Naive thymus-derived CD8-positive, alpha-beta T cell (primary cell): ENCODE measurements at regions of chr6 and their contacts with region 1.

Region 1: DNA sequence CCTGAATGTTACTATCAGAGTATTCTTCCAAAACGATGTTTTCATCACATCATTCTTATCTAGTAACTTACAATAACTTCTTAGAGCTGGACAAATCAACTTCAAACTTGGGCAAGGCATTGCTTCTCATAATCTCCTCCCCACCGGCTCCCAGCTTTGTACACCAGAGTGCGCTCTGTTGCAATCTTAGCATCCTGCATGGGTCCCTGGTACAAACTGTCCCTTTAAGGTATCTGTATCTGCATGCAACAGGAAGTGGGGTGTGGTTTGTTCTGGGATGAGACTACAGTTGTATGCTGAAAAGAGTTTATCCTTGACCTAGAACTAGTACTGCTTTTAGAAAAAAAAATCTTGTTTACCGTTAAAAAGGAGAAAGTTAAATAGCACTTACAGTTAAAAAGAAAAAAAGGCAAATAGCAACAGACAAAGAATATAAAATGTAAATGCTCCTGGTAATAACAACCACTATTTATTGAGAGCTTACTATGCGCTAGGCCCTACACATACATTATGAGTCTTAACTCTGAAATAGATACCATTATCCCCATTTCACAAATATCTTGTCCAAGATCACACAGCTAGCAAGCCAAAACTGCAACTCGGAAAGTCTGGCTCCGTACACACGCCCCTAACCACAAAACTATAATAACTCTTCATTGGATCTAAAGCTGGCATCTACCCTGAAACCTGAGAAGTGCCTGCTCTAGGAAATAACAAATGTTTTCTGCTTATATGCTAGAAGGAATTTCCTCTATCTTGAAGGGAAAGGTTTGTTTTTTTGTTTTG is 9.8 kb upstream of the HECA start:
- DNase-seq: peak; percentile 37 to 92 (median 80)
- ATAC-seq: peak; percentile 91 to 100
- H3K4me3 Mint-ChIP-seq: peak overlapping the region; percentile 24 to 78 (median 70)
- H3K27ac Mint-ChIP-seq: peak overlapping the region; percentile 35 to 97 (median 94)
- H3K4me1 Mint-ChIP-seq: peaks cover 30 to 66% (median 52%) of the 10 kb centered on the region in 4 donors
- H3K27me3 Mint-ChIP-seq: no peaks in the 10 kb centered on the region

Region 2: DNA sequence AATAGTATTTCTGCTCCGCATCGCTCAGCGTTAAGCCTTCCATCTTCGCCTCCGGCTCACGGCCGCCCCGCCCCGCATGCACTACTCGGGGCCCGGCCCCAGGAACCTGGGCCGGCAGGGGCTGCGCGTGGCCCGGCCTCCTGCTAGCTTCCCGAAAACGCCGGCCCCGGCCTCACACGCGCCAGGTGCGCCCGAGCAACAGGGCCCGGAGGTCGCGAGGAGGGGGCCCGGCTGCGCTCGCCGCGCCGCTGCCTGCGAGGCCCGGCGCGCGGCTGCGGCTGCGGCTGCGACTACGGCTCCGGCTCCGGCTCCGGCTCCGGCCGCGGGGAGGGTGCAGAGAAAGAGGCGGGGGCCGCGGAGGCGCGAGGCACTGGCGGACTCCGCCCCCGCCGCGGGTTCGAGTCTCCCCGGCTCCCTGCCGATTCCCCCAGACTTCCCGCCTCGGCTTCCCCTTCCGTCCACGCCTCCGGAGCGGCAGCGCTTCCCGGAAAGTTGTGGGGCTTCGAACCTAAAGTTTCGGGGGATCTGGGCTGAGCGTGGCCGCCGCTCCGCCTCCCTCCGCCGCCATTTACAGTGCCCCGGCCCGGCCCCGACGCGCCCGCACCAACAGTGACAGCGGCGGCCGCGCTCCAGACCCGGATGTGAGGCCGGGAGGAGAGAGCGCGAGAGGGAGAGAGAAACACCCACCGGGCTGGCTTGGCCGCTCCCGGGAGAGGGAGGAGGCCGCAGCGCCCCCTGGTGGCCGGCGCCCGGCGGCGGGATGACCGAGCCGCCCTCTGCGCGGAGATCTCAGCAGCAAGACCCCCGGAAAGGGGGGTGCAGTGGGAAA is 137.2 kb before region 1 on chr6 and contains the start of gene REPS1:
- POLR2A ChIA-PET with region 1: interaction called, 15 read pairs
- DNase-seq: peak; percentile 85 to 96 (median 92)
- ATAC-seq: peak; percentile 84 to 87
- H3K4me3 Mint-ChIP-seq: peak within 1 kb of the TSS in 9 of 10 donors; percentile 87 to 96 (median 91)
- H3K27ac Mint-ChIP-seq: peak within 1 kb of the TSS in 9 of 10 donors; percentile 61 to 96 (median 93)
- H3K4me1 Mint-ChIP-seq: peaks cover 8 to 23% (median 15%) of the 10 kb centered on the region in 4 donors
- H3K27me3 Mint-ChIP-seq: no peaks in the 10 kb centered on the region
- polyA plus RNA-seq, gene REPS1: 19.4 to 45.3 (median 28.4) TPM

Region 3: DNA sequence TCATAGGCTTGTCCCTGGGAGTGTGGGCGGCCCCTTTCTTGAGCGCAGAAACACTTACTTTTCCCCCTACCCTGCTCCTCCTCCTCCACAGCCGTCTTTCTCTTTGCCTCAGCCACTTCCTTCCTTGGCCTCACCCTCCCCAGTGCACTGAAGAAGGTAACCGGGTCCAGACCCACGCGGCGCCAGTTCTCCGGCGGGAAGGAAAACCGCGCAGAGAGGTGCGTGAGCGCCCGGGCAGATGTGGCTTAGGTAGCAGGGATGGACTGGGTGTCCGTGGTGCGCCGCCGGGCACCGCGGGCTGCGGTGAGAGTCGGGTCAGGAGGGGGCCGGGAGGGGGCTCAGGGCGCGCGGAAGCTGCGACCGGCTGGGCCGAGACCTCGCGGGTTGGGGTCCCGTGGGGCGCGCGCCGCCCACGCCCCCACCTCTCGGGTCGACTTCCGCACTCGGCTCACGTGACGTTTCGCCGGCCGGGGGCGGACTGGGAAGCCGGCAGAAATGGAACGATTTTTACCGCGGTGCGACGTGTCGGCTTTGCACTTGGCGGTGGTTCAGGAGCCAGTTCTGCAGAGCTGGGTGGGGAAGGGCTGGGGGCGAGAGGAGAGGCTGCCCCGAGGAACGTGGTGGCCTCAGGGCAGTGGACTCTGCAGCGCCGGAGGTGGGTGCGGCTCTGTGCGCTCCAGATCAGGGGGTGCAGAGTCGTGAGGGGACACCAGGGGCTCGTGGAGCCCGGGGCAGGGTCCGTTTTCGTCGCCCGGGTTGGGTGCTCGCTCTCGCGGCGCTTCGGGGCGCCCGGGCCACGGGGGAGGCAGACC is 96.2 kb before region 1 on chr6 and contains the start of gene ABRACL:
- POLR2A ChIA-PET with region 1: interaction called, 14 read pairs
- DNase-seq: peak; percentile 54 to 88 (median 74)
- ATAC-seq: peak; percentile 83 to 89
- H3K4me3 Mint-ChIP-seq: peak within 1 kb of the TSS in 7 of 10 donors; percentile 87 to 97 (median 93)
- H3K27ac Mint-ChIP-seq: peak within 1 kb of the TSS; percentile 88 to 97 (median 96)
- H3K4me1 Mint-ChIP-seq: peaks cover 16 to 33% (median 20%) of the 10 kb centered on the region in 4 donors
- H3K27me3 Mint-ChIP-seq: no peaks in the 10 kb centered on the region
- polyA plus RNA-seq, gene ABRACL: 210 to 228 (median 217) TPM

Region 4: DNA sequence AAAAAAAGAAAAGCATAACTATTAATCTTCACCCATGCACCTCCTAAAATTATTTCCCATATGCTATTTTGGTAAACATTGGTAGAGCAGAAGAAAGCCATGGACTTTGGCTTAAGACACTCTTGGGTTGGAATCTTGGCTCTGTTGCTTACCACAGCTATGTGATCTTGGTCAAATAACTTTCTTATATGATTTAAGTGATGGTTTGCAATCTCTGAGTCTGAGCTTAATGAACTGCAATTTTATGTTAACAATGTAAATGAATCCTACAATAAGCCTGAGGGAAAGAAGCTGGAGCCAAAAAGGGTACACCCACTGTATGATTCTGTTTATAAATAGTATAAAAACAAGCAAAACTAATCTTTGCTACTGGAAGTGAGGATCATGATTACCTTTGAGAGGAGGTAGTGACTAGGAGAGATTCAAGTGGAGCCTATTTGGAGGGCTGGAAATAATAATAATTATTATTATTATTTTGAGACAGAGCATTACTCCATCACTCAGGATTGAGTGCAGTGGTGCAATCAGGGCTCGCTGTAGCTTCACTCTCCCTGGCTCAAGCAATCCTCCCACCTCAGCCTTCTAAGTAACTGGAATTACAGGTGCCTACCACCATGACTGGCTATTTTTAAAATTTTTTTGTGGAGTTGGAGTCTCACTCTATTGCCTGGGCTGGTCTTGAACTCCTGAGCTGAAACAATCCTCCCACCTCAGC is 62.0 kb before region 1 on chr6:
- POLR2A ChIA-PET with region 1: no interaction called
- DNase-seq: no peak
- ATAC-seq: no peak
- H3K4me3 Mint-ChIP-seq: no peak overlapping the region
- H3K27ac Mint-ChIP-seq: no peak overlapping the region
- H3K4me1 Mint-ChIP-seq: peaks cover 0 to 6% (median 3%) of the 10 kb centered on the region in 4 donors
- H3K27me3 Mint-ChIP-seq: peaks cover 0 to 3% (median 0%) of the 10 kb centered on the region in 5 donors

Region 5: GRCh38 chr6:139080255-139080920 is 44.7 kb before region 1 on chr6:
- POLR2A ChIA-PET with region 1: no interaction called
- DNase-seq: no peak
- ATAC-seq: no peak
- H3K4me3 Mint-ChIP-seq: no peak overlapping the region
- H3K27ac Mint-ChIP-seq: no peak overlapping the region
- H3K4me1 Mint-ChIP-seq: peaks cover 0 to 11% (median 6%) of the 10 kb centered on the region in 4 donors
- H3K27me3 Mint-ChIP-seq: no peaks in the 10 kb centered on the region

Region 6: GRCh38 chr6:139109558-139109957 is 15.5 kb before region 1 on chr6:
- POLR2A ChIA-PET with region 1: interaction called, 38 read pairs
- DNase-seq: peak in 4 of 10 donors; percentile 19 to 38 (median 34)
- ATAC-seq: no peak
- H3K4me3 Mint-ChIP-seq: peak overlapping the region in 2 of 10 donors; percentile 22 to 30
- H3K27ac Mint-ChIP-seq: peak overlapping the region in 8 of 10 donors; percentile 60 to 96 (median 81)
- H3K4me1 Mint-ChIP-seq: peaks cover 21 to 71% (median 55%) of the 10 kb centered on the region in 4 donors
- H3K27me3 Mint-ChIP-seq: no peaks in the 10 kb centered on the region

Region 7: DNA sequence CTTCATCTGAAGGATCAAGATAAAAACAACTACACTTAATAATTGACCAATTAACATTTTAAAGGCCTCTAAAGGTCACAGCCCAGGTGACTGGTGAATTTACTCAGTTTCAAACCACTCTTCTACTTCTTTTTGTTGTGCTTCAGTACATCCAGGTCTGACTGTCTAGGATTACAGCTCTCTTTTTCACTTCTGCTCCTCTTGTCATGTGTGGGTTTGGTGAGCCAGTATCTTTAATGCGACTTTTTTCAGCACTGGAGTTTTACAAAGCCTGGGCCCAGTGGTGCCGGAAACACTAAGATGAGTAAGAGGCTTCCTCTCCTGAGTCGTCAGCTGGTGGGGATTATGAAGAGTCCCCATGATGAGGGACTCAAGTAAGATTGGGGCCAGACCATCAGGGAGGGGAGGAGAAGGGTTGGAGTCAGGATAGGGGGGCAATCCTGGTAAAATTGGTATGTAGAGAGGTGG is 36.8 kb after region 1 on chr6:
- POLR2A ChIA-PET with region 1: interaction called, 18 read pairs
- DNase-seq: peak; percentile 25 to 76 (median 60)
- ATAC-seq: peak; percentile 53 to 65
- H3K4me3 Mint-ChIP-seq: peak overlapping the region; percentile 70 to 95 (median 83)
- H3K27ac Mint-ChIP-seq: peak overlapping the region; percentile 85 to 97 (median 94)
- H3K4me1 Mint-ChIP-seq: peaks cover 51 to 95% (median 91%) of the 10 kb centered on the region in 4 donors
- H3K27me3 Mint-ChIP-seq: no peaks in the 10 kb centered on the region

Region 8: GRCh38 chr6:139173172-139173571 is 48.1 kb after region 1 on chr6:
- POLR2A ChIA-PET with region 1: interaction called, 11 read pairs
- DNase-seq: peak in 4 of 10 donors; percentile 28 to 70 (median 52)
- ATAC-seq: peak; percentile 75
- H3K4me3 Mint-ChIP-seq: peak overlapping the region; percentile 23 to 79 (median 66)
- H3K27ac Mint-ChIP-seq: peak overlapping the region; percentile 72 to 92 (median 87)
- H3K4me1 Mint-ChIP-seq: peaks cover 68 to 96% (median 93%) of the 10 kb centered on the region in 4 donors
- H3K27me3 Mint-ChIP-seq: no peaks in the 10 kb centered on the region

Region 9: DNA sequence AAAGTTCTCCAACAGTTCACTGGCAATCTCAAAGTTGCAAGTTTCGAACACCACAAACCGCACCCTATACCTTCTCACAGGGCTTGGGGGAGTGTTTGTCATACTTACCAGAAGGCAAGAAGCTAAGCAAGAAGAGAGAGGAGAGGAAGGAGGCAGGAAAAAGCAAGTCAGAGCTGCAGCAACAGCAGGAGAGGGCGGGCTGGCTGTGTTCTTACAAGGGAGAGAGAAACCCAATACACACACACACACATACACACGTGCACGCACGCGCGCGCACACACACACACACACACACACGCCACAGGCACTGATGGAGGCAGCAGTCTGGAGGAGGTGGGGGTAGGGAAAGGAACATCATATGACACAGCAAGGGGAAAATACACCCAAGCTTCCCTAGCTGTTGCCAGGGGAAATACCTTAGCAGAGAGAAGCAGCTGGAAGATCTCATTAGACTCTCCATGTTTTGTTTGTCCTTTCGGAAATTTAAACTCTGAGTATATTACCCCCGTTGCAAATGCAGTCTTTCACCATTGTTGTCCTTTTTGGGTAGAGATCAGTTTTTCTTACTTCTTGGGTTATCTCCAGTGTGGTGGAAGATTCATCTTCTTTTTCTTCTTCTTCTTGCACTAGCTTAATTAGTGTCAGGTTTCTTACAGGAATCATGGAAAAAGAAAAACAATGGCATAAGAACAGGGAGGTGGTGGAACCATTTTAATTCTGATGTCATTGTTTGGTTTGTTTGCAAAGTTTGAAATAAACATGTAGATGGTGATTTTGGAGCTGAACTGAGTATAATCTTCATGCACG is 166.9 kb after region 1 on chr6 and contains the start of gene TXLNB:
- POLR2A ChIA-PET with region 1: interaction called, 15 read pairs
- DNase-seq: peak; percentile 48 to 92 (median 79)
- ATAC-seq: peak; percentile 88 to 89
- H3K4me3 Mint-ChIP-seq: peak within 1 kb of the TSS; percentile 69 to 91 (median 85)
- H3K27ac Mint-ChIP-seq: peak within 1 kb of the TSS; percentile 94 to 99 (median 97)
- H3K4me1 Mint-ChIP-seq: peaks cover 30 to 80% (median 66%) of the 10 kb centered on the region in 4 donors
- H3K27me3 Mint-ChIP-seq: peaks cover 0 to 1% (median 0%) of the 10 kb centered on the region in 5 donors
- polyA plus RNA-seq, gene TXLNB: 0.11 to 0.65 TPM in 2 of 3 donors, not detected in the other